ENCODE measurements at regions of chr12 and their contacts with region 1.

Region 1: GRCh38 chr12:109110988-109111495 is 5.3 kb upstream of the ACACB start:
- DNase-seq: peak; percentile 68
- CTCF ChIP-seq: no peak

Region 2: DNA sequence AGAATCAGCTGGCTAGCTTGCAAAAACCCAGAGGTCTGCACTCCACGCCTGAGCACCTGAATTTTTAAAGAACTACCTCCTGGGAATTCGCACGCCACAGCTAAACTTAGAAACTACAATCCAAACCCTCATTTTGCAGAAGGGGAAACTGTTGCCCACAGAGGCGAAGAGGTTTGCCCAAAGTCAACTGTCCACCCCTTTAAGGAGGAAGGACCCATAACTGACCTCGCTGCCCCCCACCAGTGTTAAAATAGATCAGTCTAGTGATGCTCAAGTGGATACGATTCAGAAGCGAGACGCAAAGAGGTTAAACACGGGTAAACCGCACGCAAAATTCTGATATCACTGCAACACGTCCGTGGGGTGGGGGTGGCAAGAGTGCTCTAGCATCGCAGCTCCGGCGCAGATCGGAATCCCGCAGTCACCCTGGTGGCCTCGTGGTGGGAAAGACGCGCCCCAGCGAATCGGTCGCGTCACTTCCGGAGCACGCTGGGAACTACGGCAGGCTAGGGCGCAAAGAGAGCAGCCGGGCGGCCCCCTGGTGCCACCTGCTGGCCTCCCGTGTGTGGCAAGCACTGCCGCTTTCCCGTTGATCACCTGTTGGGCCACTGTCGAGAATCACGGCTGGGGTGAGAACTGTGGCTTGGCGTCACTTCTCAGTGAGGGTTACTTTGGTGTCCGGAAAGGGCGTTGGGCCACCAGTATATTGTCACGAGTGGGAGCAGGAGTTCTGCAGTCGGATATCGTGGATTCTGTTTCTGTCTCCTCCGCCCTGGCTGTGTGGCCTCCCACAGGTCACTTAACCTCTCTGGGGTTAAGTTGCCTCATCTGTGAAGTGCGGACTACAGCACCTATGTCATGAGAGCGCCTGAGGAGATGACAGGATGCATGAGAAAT is 17.8 kb before region 1 on chr12 and contains the start of gene ALKBH2:
- CTCF ChIA-PET with region 1: interaction called, 17 read pairs
- POLR2A ChIA-PET with region 1: no interaction called
- DNase-seq: peak; percentile 92
- CTCF ChIP-seq: peak; percentile 99

Region 3: GRCh38 chr12:109099431-109100020 is 11.5 kb before region 1 on chr12:
- CTCF ChIA-PET with region 1: interaction called, 13 read pairs
- POLR2A ChIA-PET with region 1: no interaction called
- DNase-seq: no peak
- CTCF ChIP-seq: no peak

Region 4: GRCh38 chr12:109121346-109121880 is 10.4 kb after region 1 on chr12:
- CTCF ChIA-PET with region 1: interaction called, 25 read pairs
- POLR2A ChIA-PET with region 1: no interaction called
- DNase-seq: no peak
- CTCF ChIP-seq: no peak

Region 5: GRCh38 chr12:109131154-109132050 is 20.4 kb after region 1 on chr12:
- CTCF ChIA-PET with region 1: interaction called, 10 read pairs
- POLR2A ChIA-PET with region 1: no interaction called
- DNase-seq: no peak
- CTCF ChIP-seq: no peak

Region 6: GRCh38 chr12:109385339-109386067 is 274.5 kb after region 1 on chr12:
- CTCF ChIA-PET with region 1: interaction called, 14 read pairs
- POLR2A ChIA-PET with region 1: interaction called, 3 read pairs
- DNase-seq: peak; percentile 30
- CTCF ChIP-seq: peak; percentile 45

Region 7: GRCh38 chr12:109393437-109394345 is 282.6 kb after region 1 on chr12:
- CTCF ChIA-PET with region 1: interaction called, 17 read pairs
- POLR2A ChIA-PET with region 1: interaction called, 3 read pairs
- DNase-seq: peak; percentile 79
- CTCF ChIP-seq: peak; percentile 91

Measured in GM10248 (cell line).